ENCODE measurements at regions of chr19 and their contacts with region 1.

Region 1: DNA sequence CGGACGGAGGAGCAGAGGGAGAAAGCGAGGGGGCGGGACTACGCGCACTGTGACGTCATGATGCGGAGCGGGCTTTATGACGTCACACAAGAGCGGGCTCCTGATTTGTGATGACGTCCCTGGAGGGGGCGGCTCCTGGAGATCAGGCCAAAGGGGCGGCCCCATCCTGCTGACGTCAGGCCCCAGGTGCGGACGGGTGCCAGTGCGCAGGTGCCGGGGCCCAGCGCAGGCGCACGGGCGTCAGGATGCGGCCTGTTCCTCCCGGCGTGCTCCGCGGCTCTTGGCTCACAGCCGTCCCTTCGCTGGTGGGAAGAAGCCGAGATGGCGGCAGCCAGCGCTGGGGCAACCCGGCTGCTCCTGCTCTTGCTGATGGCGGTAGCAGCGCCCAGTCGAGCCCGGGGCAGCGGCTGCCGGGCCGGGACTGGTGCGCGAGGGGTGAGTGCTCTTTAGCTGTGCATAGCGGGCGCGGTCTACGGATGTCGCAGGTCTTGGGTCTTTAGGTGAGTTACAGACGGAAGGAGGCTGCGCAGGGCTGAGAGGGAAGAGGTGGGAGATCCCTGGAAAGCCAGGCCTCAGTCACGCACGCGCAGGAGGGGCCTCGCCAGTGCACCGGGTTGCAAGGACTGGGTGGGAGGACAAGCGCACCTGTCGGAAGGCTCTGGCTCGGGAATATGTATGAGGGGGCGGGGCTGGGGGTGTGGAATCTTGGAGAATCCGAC is at the starts of genes EMC10 and GARIN5A:
- DNase-seq: peak; percentile 97
- H3K4me3 Mint-ChIP-seq: peak within 1 kb of the TSS; percentile 99
- H3K27ac Mint-ChIP-seq: peak within 1 kb of the TSS; percentile 86
- H3K4me1 Mint-ChIP-seq: peaks cover 28% of the 10 kb centered on the region
- H3K27me3 Mint-ChIP-seq: no peaks in the 10 kb centered on the region
- total RNA-seq, gene EMC10: 28.4 to 29.2 TPM
- total RNA-seq, gene GARIN5A: 0.57 TPM in 1 of 2 experiments, not detected in the other

Region 2: DNA sequence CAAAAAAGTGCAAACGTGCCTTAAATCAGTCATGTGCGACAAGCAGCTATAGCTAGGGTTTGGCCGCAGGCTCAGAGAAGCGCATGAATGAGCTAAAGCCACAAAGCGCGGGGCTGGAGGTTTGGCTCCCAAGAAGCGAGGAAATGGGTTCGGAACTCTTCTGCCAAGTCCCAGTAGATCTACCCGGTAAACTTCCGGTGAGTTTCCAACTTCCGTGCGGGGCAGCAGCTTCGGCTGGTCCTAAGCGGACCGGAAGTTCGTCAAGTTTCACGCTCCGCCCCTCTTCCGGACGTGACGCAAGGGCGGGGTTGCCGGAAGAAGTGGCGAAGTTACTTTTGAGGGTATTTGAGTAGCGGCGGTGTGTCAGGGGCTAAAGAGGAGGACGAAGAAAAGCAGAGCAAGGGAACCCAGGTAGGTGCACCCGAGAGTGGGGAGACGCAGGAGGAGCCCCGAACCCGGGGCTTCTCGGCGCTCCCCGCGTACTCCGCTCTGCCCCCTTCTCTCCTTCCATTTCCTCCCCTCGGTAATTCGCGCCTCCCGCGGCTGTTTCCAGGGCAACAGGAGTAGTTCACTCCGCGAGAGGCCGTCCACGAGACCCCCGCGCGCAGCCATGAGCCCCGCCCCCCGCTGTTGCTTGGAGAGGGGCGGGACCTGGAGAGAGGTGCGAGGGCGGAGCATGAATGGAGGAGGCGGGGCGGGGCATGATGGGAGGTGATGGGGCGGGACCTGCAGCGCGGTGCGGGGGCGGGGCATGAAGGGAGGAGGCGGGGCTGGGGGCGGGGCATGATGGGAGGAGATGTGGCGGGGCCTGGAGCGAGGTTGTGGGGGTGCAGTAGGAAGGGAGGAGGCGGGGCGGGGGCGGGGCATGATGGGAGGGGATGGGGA is 100.0 kb before region 1 on chr19 and contains the start of gene NR1H2:
- CTCF ChIA-PET with region 1: no interaction called
- intact Hi-C with region 1: loop called (anchors 1 kb)
- DNase-seq: peak; percentile 96
- H3K4me3 Mint-ChIP-seq: peak within 1 kb of the TSS; percentile 100
- H3K27ac Mint-ChIP-seq: peak within 1 kb of the TSS; percentile 100
- H3K4me1 Mint-ChIP-seq: peaks cover 19% of the 10 kb centered on the region
- H3K27me3 Mint-ChIP-seq: no peaks in the 10 kb centered on the region
- total RNA-seq, gene NR1H2: 47.2 to 49.3 TPM

Region 3: GRCh38 chr19:50383852-50384684 is 92.3 kb before region 1 on chr19 and contains the start of gene POLD1:
- CTCF ChIA-PET with region 1: no interaction called
- intact Hi-C with region 1: loop called (anchors 1 kb)
- DNase-seq: peak; percentile 99
- H3K4me3 Mint-ChIP-seq: peak within 1 kb of the TSS; percentile 98
- H3K27ac Mint-ChIP-seq: peak within 1 kb of the TSS; percentile 95
- H3K4me1 Mint-ChIP-seq: peaks cover 36% of the 10 kb centered on the region
- H3K27me3 Mint-ChIP-seq: no peaks in the 10 kb centered on the region
- total RNA-seq, gene POLD1: 221 to 224 TPM

Region 4: DNA sequence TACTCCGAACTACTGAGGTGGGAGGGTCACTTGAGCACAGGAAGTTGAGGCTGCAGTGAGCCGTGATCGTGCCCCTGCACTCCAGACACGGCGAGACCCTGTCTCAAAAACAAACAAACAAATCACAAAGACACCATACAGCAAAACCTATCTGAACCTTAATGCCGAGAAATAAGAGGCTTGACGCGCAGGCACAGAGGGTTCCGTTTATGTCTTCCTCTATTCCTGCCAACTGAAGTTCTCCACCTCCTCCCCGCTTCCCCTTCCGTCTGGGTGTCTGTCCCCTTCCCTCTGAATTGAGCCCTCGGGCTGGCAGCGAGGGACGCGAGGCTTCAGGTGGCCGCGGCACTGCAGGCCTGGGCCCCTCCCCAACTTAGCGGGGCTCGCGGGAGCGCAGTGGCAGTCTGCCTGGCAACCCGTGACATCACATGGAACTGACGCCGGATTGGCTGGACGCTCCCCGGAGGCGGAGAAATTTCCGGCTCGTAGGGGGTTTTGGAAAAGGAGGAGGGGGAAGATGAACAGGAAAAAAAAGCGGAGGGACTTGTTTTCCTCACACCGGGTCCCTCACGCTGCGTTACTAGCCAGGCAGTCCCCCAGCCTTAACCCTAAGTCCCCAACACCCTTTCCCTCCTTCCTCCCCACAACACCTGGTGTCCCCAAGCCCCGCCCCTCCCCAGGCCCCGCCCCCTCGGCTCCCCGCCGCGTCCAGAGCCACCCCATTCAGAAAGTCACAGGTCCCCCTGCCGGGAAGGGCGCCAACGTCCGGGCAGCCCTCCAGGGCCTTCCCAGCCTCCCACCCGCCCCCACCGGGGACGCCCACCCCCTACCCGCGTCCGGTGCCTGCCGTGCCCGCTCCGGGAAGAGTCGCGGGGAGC is 44.8 kb before region 1 on chr19:
- CTCF ChIA-PET with region 1: no interaction called
- intact Hi-C with region 1: loop called (anchors 1 kb)
- DNase-seq: peak; percentile 93
- H3K4me3 Mint-ChIP-seq: peak overlapping the region; percentile 90
- H3K27ac Mint-ChIP-seq: peak overlapping the region; percentile 88
- H3K4me1 Mint-ChIP-seq: peaks cover 17% of the 10 kb centered on the region
- H3K27me3 Mint-ChIP-seq: peaks cover 11% of the 10 kb centered on the region

Measured in activated naive CD4-positive, alpha-beta T cell treated with anti-CD3 and anti-CD28 coated beads for 36 hours (primary cell).